Activated T-helper 2 cell treated with anti-CD3 and anti-CD28 coated beads, Interferon-gamma antibody, Interleukin-2, Interleukin-4, amounts not matched to agents 10 μg/mL and 5 μg/mL and 100 μg/mL, durations not matched to agents 14 hours and 24 hours and 36 hours (primary cell): ENCODE measurements at regions of chr12 and their contacts with region 1.

Region 1: DNA sequence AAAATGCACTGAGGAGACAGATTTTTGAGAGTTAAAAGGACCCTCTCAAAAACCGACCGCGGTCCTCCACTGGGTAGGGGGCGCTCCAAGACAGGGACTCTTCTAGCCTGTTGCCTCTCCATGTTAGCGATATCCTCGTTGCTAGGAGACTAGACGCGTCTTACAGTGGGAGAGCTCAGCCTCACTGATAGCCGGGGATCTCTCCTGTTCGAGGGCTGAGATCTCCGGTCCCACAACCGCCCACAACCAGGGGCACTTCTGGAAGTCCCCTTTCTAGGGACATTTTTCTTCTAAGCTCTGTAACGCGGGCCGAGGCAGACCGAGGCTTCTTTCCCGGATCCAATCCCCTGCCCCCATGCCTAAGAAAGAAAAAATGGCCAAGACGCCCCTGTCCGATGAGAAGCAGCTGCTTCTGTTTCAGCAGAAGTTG is 21.3 kb downstream of the FKBP11 start:
- DNase-seq: peak; percentile 69
- H3K4me3 Mint-ChIP-seq: peak overlapping the region; percentile 62
- H3K27ac Mint-ChIP-seq: no peak overlapping the region
- H3K4me1 Mint-ChIP-seq: peaks cover 9% of the 10 kb centered on the region
- H3K27me3 Mint-ChIP-seq: no peaks in the 10 kb centered on the region

Region 2: DNA sequence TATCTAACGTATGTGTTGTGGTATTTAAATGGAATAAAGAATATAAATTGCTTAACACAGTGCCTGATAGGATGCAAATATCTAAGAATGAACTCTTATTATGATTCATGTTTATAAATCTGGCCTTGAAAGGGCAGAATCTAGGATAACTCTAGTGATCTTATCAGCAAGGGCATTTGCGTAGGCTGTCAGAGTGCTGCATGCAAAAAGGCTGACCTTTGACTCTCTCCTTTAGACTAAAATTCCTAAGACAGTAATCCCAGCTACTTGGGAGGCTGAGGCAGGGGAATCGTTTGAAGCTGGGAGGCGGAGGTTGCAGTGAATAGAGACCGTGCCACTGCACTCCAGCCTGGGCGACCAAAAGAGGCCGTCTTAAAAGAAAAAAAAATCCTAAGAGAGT is 462.9 kb before region 1 on chr12:
- intact Hi-C with region 1: no loop called
- DNase-seq: no peak
- H3K4me3 Mint-ChIP-seq: no peak overlapping the region
- H3K27ac Mint-ChIP-seq: no peak overlapping the region
- H3K4me1 Mint-ChIP-seq: no peaks in the 10 kb centered on the region
- H3K27me3 Mint-ChIP-seq: no peaks in the 10 kb centered on the region

Region 3: DNA sequence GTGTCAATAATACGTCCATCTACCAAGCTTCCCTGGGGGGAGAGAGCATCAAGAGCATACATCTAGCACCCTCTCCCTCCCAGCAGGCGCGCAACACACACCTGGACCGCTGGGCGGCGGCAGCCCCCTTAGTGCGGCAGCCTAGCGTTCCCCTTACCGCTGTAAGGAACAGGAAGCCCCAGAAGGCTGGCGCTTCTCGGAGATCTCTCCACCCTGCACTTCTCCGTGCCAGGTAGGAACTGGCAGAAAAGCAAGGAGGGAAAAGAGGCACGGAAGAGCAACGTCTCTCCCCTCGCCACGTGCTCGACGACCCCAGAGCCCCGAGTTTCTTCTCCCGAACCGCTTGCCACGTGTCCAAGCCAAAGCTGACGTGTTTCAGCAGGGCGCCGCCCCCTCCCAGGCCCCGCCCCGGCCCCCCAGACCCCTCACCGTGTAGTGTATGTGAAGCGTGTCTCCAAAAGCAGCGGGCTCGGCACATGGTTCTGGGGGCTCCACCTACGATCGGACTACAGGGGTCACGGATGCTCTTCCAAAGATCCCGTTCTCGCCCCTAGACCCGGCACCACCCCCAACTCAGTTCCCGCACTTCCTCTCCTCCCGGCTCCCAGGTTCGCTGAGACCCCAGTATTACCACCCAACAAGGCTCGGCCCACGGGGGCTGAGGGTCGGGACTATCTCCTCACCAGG is 20.8 kb after region 1 on chr12:
- intact Hi-C with region 1: loop called (anchors 2 kb)
- DNase-seq: peak; percentile 51
- H3K4me3 Mint-ChIP-seq: peak overlapping the region; percentile 87
- H3K27ac Mint-ChIP-seq: peak overlapping the region; percentile 76
- H3K4me1 Mint-ChIP-seq: peaks cover 26% of the 10 kb centered on the region
- H3K27me3 Mint-ChIP-seq: no peaks in the 10 kb centered on the region

Region 4: DNA sequence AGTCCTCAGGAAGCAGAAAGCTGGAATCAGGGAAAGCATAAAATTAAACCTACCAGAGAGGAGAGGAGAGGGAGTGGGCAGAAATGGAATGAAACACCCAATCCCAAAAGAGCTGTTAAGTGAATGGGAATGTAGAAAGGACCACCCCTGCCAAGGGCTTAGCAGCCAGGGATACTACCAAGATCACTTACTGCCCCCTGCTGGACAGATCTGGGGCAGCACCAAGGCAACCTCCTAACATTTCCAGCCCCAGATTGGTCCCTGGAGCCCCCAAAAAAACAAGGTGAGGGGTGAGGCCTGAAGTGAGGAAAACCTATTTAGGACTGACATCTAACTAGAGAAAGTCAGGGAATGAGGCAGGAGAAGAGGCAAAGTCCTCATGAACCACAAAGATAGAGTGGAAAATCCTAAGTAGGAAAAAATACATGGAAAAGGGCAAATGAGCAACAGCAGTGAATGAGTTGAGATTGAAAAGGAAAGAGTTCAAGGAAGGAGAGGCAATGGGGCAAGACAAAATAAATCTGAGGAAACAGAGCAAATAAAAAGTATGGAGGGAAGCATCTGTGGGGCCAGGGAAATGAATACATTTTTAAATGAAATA is 32.5 kb after region 1 on chr12:
- intact Hi-C with region 1: loop called (anchors 5 kb)
- DNase-seq: peak; percentile 62
- H3K4me3 Mint-ChIP-seq: no peak overlapping the region
- H3K27ac Mint-ChIP-seq: no peak overlapping the region
- H3K4me1 Mint-ChIP-seq: peaks cover 12% of the 10 kb centered on the region
- H3K27me3 Mint-ChIP-seq: no peaks in the 10 kb centered on the region

Region 5: GRCh38 chr12:48980953-48981756 is 77.2 kb after region 1 on chr12:
- intact Hi-C with region 1: no loop called
- DNase-seq: no peak
- H3K4me3 Mint-ChIP-seq: peak overlapping the region; percentile 68
- H3K27ac Mint-ChIP-seq: peak overlapping the region; percentile 48
- H3K4me1 Mint-ChIP-seq: peaks cover 45% of the 10 kb centered on the region
- H3K27me3 Mint-ChIP-seq: peaks cover 84% of the 10 kb centered on the region

Region 6: GRCh38 chr12:49069507-49070346 is 165.7 kb after region 1 on chr12 and contains the start of gene RHEBL1:
- intact Hi-C with region 1: no loop called
- DNase-seq: peak; percentile 100
- H3K4me3 Mint-ChIP-seq: peak within 1 kb of the TSS; percentile 98
- H3K27ac Mint-ChIP-seq: peak within 1 kb of the TSS; percentile 92
- H3K4me1 Mint-ChIP-seq: peaks cover 25% of the 10 kb centered on the region
- H3K27me3 Mint-ChIP-seq: no peaks in the 10 kb centered on the region
- total RNA-seq, gene RHEBL1: 14.2 and 16.0 TPM in 2 replicates